Activated naive CD4-positive, alpha-beta T cell treated with anti-CD3 and anti-CD28 coated beads, Interleukin-2, amount 10 ng/mL, durations not matched to agents 7 days and 5 days (primary cell): ENCODE measurements at regions of chr13 and their contacts with region 1.

Region 1: DNA sequence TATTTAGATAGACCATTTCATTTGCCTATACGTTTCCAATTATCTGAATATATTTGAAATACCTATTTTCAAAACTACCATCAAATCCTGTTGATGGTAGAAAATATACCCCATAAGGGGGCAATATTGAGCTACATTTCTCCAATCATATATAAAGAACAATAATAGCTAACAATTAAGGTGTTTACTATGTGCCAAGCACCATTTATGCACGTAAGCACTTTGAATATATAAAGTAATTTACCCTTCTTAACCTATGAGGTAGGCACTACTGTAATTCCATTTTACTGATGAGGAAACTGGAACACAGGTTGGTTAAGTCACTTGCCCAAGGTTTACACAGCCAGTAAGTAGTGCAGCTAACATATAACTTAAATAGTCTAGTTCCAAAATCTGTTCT is 79.2 kb downstream of the UBL3 start:
- DNase-seq: no peak
- H3K4me3 Mint-ChIP-seq: no peak overlapping the region
- H3K27ac Mint-ChIP-seq: no peak overlapping the region
- H3K4me1 Mint-ChIP-seq: no peaks in the 10 kb centered on the region
- H3K27me3 Mint-ChIP-seq: no peaks in the 10 kb centered on the region

Region 2: DNA sequence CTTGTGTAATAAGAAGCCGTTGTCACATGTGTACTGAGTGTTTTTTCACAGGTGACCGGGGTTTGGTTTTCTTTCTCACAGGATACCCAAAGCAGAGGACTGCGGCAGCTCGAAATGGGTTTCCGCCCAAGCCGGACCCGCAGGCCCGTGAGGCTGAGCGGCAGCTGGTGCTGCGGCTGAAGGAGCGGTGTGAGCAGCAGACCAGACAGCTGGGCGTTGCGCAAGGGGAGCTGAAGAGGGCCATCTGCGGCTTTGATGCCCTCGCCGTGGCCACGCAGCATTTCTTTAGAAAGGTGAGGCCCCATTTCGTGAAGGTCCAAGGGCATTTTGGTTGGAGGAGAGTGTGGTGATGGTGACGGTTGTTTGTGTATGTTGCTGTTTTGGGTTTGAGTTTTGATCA is 412.1 kb before region 1 on chr13:
- CTCF ChIA-PET with region 1: no interaction called
- DNase-seq: no peak
- H3K4me3 Mint-ChIP-seq: no peak overlapping the region
- H3K27ac Mint-ChIP-seq: no peak overlapping the region
- H3K4me1 Mint-ChIP-seq: no peaks in the 10 kb centered on the region
- H3K27me3 Mint-ChIP-seq: peaks cover 15% of the 10 kb centered on the region

Region 3: DNA sequence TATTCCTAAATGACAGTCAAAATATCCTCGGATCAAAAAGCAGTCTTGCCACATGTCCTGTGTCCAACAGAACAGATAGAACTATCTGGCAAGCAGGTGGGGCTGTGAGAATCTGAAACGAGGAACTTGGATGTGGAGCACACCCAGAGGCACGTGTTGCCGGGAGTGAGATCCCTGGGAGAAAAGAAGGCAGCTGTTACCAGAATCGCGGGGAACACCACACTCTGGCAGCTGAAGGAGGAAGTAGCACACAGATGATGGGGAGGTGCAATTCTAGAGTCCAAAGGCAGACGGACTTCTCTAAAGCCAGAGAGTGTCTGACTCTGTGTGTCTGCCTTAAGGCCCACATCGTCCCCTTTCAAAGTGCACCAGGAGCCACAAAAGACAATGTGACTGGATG is 198.1 kb before region 1 on chr13:
- CTCF ChIA-PET with region 1: no interaction called
- DNase-seq: no peak
- H3K4me3 Mint-ChIP-seq: no peak overlapping the region
- H3K27ac Mint-ChIP-seq: no peak overlapping the region
- H3K4me1 Mint-ChIP-seq: peaks cover 17% of the 10 kb centered on the region
- H3K27me3 Mint-ChIP-seq: no peaks in the 10 kb centered on the region

Region 4: GRCh38 chr13:29782798-29783197 is 11.6 kb after region 1 on chr13:
- CTCF ChIA-PET with region 1: interaction called, 11 read pairs
- DNase-seq: no peak
- H3K4me3 Mint-ChIP-seq: no peak overlapping the region
- H3K27ac Mint-ChIP-seq: no peak overlapping the region
- H3K4me1 Mint-ChIP-seq: no peaks in the 10 kb centered on the region
- H3K27me3 Mint-ChIP-seq: no peaks in the 10 kb centered on the region

Region 5: DNA sequence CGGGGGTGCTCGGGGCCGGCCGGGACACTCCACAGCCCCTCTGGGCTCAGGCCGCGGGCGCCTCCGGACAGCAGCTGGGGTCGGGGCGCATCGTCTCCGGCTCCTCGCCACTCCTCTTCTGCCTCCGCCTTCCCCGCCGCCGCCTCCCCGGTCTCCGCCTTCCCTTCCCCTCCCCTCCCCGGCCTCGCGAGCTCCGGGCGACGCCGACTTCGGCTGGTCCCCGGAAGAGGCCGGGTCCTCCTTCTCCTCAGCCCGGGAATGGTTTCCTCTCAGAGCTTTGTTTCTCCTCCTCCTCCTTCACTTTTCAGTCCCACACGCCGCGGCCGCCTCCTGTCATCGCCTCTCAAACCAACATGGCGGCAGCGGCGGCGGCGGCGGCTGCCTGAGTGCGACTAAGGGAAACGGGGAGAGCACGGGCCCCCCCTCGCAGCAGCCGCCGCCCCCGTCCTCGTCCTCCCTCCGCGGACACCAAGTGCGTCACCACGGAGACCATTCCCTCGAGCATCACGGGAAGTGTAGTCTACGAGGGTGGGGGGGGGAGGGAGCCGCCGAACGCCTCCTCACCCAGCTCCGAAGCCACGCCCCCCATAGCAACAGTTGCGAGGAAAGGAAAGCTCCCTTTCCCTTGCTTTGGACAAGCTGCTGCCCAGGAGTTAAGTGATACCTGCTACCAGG is 79.1 kb after region 1 on chr13 and contains the start of gene UBL3:
- CTCF ChIA-PET with region 1: interaction called, 12 read pairs
- DNase-seq: peak; percentile 96
- H3K4me3 Mint-ChIP-seq: peak within 1 kb of the TSS; percentile 87
- H3K27ac Mint-ChIP-seq: peak within 1 kb of the TSS; percentile 99
- H3K4me1 Mint-ChIP-seq: peaks cover 48% of the 10 kb centered on the region
- H3K27me3 Mint-ChIP-seq: peaks cover 4% of the 10 kb centered on the region